Activated CD8-positive, alpha-beta T cell treated with anti-CD3 and anti-CD28 coated beads for 36 hours (primary cell): ENCODE measurements at regions of chr16 and their contacts with region 1.

Region 1: DNA sequence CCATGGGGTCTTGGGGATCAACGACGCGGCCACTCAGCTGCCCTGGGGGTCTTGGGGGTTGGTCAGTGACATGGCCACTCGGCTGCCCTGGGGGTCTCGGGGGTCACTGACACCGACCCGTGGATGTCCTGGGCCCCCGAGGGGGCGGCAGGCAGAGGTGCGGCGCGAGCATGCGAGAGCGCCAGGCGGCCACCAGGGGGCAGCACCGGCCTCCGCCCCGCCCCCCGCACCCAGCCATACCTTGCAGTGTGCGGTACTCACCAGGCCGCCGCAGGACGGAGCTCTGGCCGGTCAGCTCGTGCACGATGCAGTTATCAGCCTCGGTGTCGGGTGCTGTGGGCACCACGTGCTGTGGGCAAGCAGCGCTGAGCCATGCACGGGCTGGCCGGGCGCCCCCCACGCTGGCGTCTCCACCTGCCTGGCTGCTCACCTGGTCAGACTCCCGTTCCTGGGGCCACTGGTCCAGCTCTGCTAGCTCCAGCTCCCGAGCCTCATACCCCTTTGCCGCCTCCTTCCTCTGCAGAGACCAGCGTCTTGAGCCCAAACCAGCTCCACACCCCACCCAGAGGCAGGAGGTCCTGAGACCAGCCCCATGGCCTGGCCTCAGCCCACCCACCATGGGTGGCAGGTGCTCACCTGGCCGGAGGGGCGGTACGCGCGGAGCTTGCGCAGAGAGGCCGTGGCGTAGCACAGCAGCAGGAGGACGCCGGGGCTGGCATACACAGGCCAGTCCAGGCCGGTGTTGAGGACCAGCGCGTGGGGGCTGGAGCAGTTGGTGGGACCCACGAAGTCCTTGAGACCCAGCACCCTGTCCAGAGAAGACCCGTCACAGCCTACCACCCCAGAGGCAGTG is 31.2 kb downstream of the CTU2 start:
- DNase-seq: peak; percentile 65
- ATAC-seq: peak; percentile 93
- H3K4me3 Mint-ChIP-seq: no peak overlapping the region
- H3K27ac Mint-ChIP-seq: no peak overlapping the region
- H3K4me1 Mint-ChIP-seq: no peaks in the 10 kb centered on the region
- H3K27me3 Mint-ChIP-seq: no peaks in the 10 kb centered on the region
- CTCF ChIP-seq: peak; percentile 99

Region 2: DNA sequence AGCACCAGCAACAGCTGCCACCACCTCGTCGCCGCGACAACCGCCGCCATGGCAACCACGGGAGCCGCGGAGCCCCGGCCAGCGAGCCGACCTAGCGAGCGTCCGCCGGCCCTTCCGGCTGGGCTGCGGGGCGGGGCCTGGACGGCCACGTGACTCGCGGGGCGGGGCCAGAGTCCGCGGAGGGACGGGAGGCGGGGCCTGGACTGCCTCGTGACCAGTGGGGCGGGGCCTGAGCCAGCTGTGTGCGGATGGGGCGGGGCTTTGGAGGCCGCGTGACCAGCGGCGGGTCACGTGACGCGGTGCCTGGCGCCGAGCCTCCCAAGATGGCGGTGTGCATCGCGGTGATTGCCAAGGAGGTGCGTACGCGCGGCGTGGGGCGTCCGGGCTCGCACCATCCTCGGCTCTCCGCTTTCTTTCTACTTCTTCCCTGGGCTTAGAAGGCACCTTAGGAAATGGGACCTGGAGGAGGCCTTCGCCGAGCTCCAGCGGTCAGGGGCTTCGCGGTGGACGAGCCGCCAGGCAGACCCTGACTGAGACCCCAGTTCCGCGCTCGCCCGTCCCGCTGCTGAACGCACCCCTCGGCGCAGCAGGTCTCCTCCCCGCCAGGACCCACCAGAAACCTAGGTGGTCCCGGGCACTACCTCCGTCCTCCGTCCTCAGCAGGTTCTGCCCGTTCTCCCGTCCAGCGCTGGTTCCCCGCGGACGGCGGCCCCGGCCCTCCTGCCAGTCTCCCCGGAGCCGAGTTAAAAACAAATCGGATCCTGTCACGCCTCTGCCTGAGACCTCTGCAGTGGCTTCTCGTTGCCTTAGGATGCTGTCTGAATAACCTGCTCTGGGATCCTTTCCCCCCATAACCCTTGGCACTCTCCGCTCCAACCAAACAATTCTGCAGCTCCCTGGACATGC is 119.6 kb after region 1 on chr16 and contains the starts of genes GALNS and TRAPPC2L:
- CTCF ChIA-PET with region 1: interaction called, 11 read pairs
- POLR2A ChIA-PET with region 1: no interaction called
- intact Hi-C with region 1: no loop called
- DNase-seq: peak; percentile 100
- ATAC-seq: peak; percentile 92
- H3K4me3 Mint-ChIP-seq: peak within 1 kb of the TSS; percentile 92
- H3K27ac Mint-ChIP-seq: peak within 1 kb of the TSS; percentile 87
- H3K4me1 Mint-ChIP-seq: peaks cover 31% of the 10 kb centered on the region
- H3K27me3 Mint-ChIP-seq: no peaks in the 10 kb centered on the region
- CTCF ChIP-seq: no peak
- total RNA-seq, gene GALNS: 24.5 to 25.4 TPM
- total RNA-seq, gene TRAPPC2L: 56.4 to 61.9 TPM